ENCODE measurements at regions of chr5 and their contacts with region 1.

Region 1: DNA sequence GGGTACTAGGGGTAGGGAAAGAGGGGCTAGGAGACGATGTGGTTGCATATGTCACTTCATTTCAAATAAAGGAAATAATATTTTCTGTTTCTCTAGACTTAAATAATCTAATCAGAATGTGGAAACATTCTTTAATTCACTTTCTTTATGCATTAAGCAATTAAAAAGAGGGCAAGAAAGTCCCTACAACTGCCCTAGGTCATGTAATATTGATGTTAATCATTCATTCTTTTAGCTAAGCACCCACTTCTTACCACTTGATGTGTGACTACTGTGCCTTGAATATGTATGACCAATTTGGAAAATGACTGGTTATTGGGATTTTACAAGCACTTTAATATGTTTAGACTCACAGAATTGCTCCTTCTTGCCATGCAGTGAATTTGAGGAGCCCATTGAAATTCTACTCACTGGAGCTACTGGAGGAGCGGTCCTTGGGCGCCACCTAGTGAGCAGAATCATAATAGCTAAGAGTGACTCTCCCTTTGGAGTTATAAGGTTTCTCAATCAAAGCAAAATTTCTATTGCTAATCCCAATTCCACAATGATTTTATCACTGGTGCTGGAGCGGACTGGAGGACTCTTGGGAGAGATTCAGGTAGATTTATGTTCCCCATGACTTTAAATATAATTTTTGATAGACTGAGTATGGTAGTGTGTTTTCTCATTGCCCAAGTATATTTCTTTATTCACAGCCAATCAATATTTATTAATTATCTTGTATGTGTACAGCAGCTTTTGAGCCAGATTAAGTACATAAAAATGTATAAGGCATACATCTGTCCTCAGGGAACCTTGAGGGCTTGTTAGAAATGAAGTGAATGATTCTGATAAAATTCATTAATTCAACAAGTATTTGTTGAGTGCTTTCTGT is 225.1 kb downstream of the ADGRV1 start:
- DNase-seq: peak; percentile 29 to 65 (median 56)
- H3K4me3 ChIP-seq: no peak overlapping the region
- H3K27ac ChIP-seq: no peak overlapping the region
- H3K4me1 ChIP-seq: no peaks in the 10 kb centered on the region
- H3K27me3 ChIP-seq: no peaks in the 10 kb centered on the region
- CTCF ChIP-seq: peak; percentile 34 to 46 (median 43)
- EP300 ChIP-seq: no peak
- POLR2A ChIP-seq: no peak

Region 2: DNA sequence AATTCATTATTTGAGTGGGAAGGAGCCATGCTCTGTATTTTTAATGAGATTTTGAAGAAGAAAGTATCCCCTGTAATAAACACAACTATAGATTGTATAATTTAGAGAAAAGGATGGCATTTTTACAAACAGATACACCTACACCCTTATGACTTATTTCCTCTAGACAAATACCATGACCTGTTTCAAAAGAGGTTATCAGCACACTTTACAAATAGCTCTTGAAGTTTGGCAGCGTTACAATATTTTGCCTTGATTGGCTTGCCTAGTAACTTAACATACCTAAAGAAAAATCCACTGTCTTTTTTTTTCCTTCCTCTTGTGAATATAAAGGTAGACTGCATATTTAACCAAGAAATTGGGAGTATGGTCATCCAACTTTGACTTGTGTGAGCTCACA is 345.6 kb before region 1 on chr5:
- intact Hi-C with region 1: loop called in 1 of 4 experiments (anchors 5 kb)
- DNase-seq: no peak
- H3K4me3 ChIP-seq: no peak overlapping the region
- H3K27ac ChIP-seq: no peak overlapping the region
- H3K4me1 ChIP-seq: no peaks in the 10 kb centered on the region
- H3K27me3 ChIP-seq: no peaks in the 10 kb centered on the region
- CTCF ChIP-seq: no peak
- EP300 ChIP-seq: no peak
- POLR2A ChIP-seq: no peak

Region 3: DNA sequence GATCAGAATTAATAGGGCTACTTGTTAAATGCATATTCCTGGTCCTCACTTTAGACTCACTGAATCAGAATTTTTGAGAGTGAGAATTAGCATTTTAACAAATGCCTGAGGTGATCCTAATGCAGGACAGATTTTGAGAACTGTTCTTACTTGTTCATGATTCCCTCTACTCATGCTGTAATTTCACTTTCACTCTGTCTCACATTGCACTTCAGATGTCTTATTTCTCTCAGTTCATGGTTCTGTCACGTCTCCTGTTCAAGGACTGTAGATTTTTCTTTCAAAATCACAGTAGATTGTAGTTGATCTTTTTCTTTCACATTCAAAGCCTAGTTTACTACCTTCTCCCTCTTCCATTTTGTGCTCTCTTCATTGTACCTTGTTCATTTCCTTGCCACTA is 170.8 kb before region 1 on chr5:
- intact Hi-C with region 1: no loop called
- DNase-seq: no peak
- H3K4me3 ChIP-seq: no peak overlapping the region
- H3K27ac ChIP-seq: no peak overlapping the region
- H3K4me1 ChIP-seq: no peaks in the 10 kb centered on the region
- H3K27me3 ChIP-seq: no peaks in the 10 kb centered on the region
- CTCF ChIP-seq: no peak
- EP300 ChIP-seq: no peak
- POLR2A ChIP-seq: no peak

Region 4: GRCh38 chr5:90718387-90718786 is 65.3 kb before region 1 on chr5:
- intact Hi-C with region 1: no loop called
- DNase-seq: no peak
- H3K4me3 ChIP-seq: no peak overlapping the region
- H3K27ac ChIP-seq: no peak overlapping the region
- H3K4me1 ChIP-seq: no peaks in the 10 kb centered on the region
- H3K27me3 ChIP-seq: no peaks in the 10 kb centered on the region
- CTCF ChIP-seq: no peak
- EP300 ChIP-seq: no peak
- POLR2A ChIP-seq: no peak

Region 5: GRCh38 chr5:91194824-91195381 is 411.2 kb after region 1 on chr5:
- intact Hi-C with region 1: no loop called
- DNase-seq: no peak
- H3K4me3 ChIP-seq: no peak overlapping the region
- H3K27ac ChIP-seq: no peak overlapping the region
- H3K4me1 ChIP-seq: no peaks in the 10 kb centered on the region
- H3K27me3 ChIP-seq: no peaks in the 10 kb centered on the region
- CTCF ChIP-seq: no peak
- EP300 ChIP-seq: no peak
- POLR2A ChIP-seq: no peak

Measured in ovary (tissue), 10 donors.